ENCODE measurements at regions of chr5 and their contacts with region 1.

Region 1: DNA sequence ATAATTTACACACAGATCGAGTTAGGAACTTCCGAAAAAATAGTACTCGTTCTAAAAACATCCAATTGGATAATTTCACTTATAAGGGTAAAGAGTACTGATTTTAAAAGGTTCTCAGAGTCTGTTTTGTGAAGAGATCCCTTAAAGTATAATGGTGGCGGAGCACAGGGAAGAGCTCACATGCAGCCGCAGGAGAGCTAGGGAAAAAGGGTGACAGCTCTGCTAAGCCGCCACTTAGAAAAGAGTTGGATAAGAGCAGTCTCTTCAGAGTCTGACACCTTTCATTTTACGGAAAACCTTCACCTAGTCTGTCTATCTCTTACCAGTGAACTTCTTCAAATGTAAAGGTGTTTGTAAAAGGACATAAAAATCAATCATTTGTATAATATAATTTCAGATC is 149.9 kb downstream of the COMMD10 start:
- DNase-seq: no peak
- ATAC-seq: no peak
- H3K4me3 ChIP-seq: no peak overlapping the region
- H3K27ac ChIP-seq: no peak overlapping the region
- H3K4me1 ChIP-seq: no peaks in the 10 kb centered on the region
- H3K27me3 ChIP-seq: no peaks in the 10 kb centered on the region
- CTCF ChIP-seq: no peak

Region 2: DNA sequence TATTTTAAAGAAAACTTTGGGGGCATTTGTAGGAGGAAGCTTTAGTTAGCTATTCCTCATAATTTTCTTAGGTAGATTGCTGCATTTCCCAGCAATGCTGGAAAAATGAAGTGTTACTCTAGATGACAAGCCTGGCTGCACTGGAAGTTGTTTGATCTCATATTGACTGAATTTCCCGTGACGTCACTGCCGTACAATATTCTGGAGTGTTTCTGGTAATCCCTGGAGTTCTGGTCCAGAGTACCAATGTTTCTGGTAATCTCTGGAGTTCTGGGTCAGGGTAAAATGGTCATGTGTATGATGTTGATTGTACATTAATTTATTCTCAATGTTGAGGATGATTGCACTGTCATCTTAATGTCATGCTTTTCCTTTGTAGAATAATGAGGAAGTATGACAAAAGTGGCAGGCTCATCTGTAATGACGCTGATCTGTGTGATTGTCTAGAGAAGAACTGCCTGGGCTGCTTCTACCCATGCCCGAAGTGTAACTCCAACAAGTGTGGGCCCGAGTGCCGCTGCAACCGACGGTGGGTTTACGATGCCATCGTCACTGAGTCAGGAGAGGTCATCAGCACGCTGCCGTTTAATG is 176.2 kb before region 1 on chr5:
- intact Hi-C with region 1: no loop called
- DNase-seq: no peak
- ATAC-seq: no peak
- H3K4me3 ChIP-seq: no peak overlapping the region
- H3K27ac ChIP-seq: no peak overlapping the region
- H3K4me1 ChIP-seq: no peaks in the 10 kb centered on the region
- H3K27me3 ChIP-seq: peaks cover 0 to 30% (median 9%) of the 10 kb centered on the region in 7 donors
- CTCF ChIP-seq: no peak

Region 3: DNA sequence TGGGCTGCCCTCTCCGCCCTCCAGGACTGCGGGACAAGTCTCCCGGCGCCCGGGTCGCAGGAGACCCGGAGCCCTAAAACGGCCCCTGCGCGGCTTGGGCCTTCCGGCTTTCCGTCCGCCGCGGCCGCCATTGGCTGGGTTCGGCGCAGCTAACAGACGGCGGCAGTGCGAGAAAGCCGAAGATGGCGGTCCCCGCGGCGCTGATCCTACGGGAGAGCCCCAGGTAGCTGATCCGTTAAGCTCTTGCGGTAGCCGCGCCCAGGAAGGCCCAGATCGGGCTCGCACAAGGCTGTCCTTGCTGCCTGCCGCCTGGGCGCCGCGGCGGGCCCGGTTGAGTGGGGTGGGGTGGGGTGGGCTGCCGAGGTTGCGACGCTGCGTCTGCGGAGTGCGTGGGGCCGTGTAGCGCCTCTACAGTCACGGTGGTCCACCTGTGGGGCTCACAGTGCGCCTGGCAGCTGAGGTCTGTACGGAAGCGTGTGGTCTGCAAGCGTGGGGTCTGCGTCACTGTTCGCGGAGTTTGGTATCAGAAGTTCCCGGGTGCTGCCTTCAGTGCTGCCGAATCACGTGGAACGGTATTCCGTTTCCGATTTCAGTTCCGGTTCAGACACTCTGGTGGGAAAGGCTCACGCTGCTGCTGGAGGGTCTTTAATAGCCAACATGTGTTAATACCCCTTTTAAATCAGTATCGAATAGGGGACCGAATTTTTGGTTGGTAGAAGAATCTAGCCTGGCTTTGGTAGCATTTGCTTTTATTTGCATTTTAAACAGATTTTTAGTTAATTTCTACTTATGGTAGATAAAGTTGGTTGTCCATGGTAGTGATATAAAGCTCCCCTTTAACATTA is 149.6 kb before region 1 on chr5 and contains the start of gene COMMD10:
- intact Hi-C with region 1: no loop called
- DNase-seq: peak; percentile 78 to 80
- ATAC-seq: peak; percentile 91 to 95 (median 93)
- H3K4me3 ChIP-seq: peak within 1 kb of the TSS; percentile 70 to 95 (median 86)
- H3K27ac ChIP-seq: peak within 1 kb of the TSS; percentile 73 to 97 (median 92)
- H3K4me1 ChIP-seq: peaks cover 0 to 60% (median 34%) of the 10 kb centered on the region in 9 donors
- H3K27me3 ChIP-seq: no peaks in the 10 kb centered on the region
- CTCF ChIP-seq: no peak
- total RNA-seq, gene COMMD10: 27.9 to 42.8 (median 36.1) TPM

Region 4: DNA sequence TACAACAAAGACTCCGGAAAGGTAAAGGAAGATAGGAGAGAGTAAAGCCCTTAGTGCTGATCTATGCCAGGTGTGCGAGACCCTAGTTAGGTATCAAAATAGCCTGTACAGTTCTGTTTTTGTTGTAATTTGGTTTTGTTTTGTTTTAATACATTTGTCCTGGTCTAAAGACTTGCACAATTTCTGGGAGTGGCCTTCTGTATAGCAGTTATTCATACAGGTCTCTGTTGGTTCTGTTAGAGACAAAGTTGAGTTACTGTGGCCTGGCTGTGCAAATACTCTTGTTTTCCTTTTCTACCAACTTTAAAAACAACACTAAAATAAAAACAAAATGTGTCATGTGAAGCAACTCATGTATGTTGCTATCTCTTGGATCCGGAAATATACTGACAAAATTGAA is 13.8 kb after region 1 on chr5:
- intact Hi-C with region 1: no loop called
- DNase-seq: no peak
- ATAC-seq: no peak
- H3K4me3 ChIP-seq: no peak overlapping the region
- H3K27ac ChIP-seq: no peak overlapping the region
- H3K4me1 ChIP-seq: no peaks in the 10 kb centered on the region
- H3K27me3 ChIP-seq: no peaks in the 10 kb centered on the region
- CTCF ChIP-seq: no peak

Region 5: GRCh38 chr5:116830079-116830478 is 595.4 kb after region 1 on chr5:
- intact Hi-C with region 1: no loop called
- DNase-seq: no peak
- ATAC-seq: no peak
- H3K4me3 ChIP-seq: no peak overlapping the region
- H3K27ac ChIP-seq: no peak overlapping the region
- H3K4me1 ChIP-seq: no peaks in the 10 kb centered on the region
- H3K27me3 ChIP-seq: no peaks in the 10 kb centered on the region
- CTCF ChIP-seq: no peak

Region 6: GRCh38 chr5:117792476-117792875 is 1557.8 kb after region 1 on chr5:
- intact Hi-C with region 1: loop called in 1 of 10 experiments (anchors 5 kb)
- DNase-seq: no peak
- ATAC-seq: no peak
- H3K4me3 ChIP-seq: no peak overlapping the region
- H3K27ac ChIP-seq: no peak overlapping the region
- H3K4me1 ChIP-seq: peaks cover 0 to 6% (median 0%) of the 10 kb centered on the region in 9 donors
- H3K27me3 ChIP-seq: no peaks in the 10 kb centered on the region
- CTCF ChIP-seq: no peak